ENCODE measurements at regions of chr19 and their contacts with region 1.

Region 1: GRCh38 chr19:47296036-47296435 is 13.6 kb upstream of the C5AR1 start:
- DNase-seq: peak; percentile 75
- H3K4me3 ChIP-seq: no peak overlapping the region
- H3K27ac ChIP-seq: no peak overlapping the region
- H3K4me1 ChIP-seq: no peaks in the 10 kb centered on the region
- H3K27me3 ChIP-seq: no peaks in the 10 kb centered on the region
- CTCF ChIP-seq: peak; percentile 23 to 81 (median 67)
- POLR2A ChIP-seq: no peak

Region 2: DNA sequence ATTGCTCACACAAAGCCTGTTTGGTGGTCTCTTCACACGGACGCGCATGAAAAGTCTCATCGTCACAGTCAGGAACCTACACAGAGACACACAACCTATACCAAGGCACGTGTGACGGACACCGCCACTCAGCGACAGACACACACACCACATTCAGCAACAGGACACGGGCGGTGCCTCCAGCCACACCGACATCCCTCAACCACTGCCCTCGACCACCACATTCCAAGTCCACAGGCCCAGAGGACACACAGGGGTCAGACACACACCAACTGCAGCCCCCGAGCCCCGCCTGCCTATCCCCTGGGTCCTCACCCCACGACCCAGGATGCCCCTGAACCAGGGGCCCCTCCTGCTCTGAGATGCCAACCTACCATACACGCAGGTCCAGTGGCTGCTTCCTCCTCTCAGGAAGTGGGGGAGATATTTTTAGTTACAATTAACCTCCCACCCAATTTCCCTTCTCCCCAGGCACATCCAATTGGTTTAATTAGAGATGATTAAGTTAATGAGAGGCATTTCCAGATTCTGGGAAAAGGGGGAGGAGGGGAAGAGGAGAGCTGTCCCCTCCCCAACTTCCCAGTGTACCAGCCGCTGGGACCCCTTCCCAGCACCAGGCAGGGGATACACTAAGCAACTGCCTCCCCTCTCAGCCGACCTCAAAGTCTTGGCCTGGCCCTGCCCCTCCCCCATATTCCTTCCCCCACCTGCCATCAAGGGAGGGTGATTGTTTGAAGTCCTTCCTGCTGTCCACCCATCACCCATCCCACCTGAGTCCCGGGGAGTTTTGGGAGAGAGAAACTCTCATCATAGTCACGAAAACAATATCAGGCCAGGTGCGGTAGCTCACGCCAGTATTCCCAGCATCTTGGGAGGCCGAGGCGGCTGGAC is 102.9 kb after region 1 on chr19:
- intact Hi-C with region 1: no loop called
- DNase-seq: no peak
- H3K4me3 ChIP-seq: no peak overlapping the region
- H3K27ac ChIP-seq: no peak overlapping the region
- H3K4me1 ChIP-seq: no peaks in the 10 kb centered on the region
- H3K27me3 ChIP-seq: no peaks in the 10 kb centered on the region
- CTCF ChIP-seq: no peak
- POLR2A ChIP-seq: no peak

Region 3: GRCh38 chr19:47428177-47428894 is 132.3 kb after region 1 on chr19:
- intact Hi-C with region 1: loop called (anchors 10 kb)
- DNase-seq: peak; percentile 73
- H3K4me3 ChIP-seq: no peak overlapping the region
- H3K27ac ChIP-seq: peak overlapping the region; percentile 3 to 45
- H3K4me1 ChIP-seq: no peaks in the 10 kb centered on the region
- H3K27me3 ChIP-seq: peaks cover under 1% of the 10 kb centered on the region
- CTCF ChIP-seq: no peak
- POLR2A ChIP-seq: no peak

Region 4: GRCh38 chr19:47707135-47707925 is 411.3 kb after region 1 on chr19:
- intact Hi-C with region 1: loop called (anchors 10 kb)
- DNase-seq: peak; percentile 66
- H3K4me3 ChIP-seq: no peak overlapping the region
- H3K27ac ChIP-seq: no peak overlapping the region
- H3K4me1 ChIP-seq: no peaks in the 10 kb centered on the region
- H3K27me3 ChIP-seq: no peaks in the 10 kb centered on the region
- CTCF ChIP-seq: peak; percentile 53 to 82 (median 72)
- POLR2A ChIP-seq: no peak